Activated B cell treated with CpG ODN at 0.5 μM for 24 hours (primary cell): ENCODE measurements at regions of chr12 and their contacts with region 1.

Region 1: DNA sequence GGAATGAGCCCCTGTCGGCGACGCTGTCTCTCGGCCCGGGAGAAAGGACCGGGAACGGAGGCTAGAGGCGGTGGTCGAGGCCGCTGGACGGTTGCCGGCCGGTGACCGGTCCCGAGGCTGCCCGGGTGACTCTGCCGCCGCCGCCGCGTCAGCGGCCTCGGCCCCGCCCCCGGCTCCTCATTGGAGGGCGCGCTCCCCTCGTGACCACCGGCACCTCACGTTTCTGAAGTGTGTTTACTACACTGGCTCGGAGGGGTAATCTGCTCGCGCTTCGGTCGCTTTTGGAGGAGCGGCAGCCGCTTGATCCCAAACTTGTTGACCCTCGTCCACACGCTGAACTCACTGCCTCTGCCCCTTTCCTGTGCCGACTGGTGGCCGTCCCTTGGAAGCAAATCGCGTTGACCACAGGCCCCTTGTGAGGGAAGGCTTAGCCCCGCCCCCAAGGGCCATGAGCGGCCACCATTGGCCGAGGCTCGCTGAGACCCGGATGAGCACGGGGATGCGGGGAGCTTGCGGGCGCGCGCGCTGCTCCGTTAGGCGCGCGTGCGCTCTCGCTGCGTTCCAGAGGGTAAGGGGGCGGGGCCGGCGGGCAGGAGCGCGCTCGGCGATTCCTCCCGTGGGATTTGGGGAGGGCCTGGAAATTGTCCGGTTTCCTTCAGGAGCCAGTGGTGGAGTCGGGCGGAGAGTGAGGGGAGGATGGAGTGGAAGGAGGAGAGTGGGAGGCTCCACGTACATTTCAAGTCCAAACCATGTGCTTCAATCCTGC is at the start of gene CRY1:
- DNase-seq: peak; percentile 84
- ATAC-seq: peak; percentile 83
- H3K4me3 Mint-ChIP-seq: no peak within 1 kb of the TSS
- H3K27ac Mint-ChIP-seq: no peak within 1 kb of the TSS
- H3K4me1 Mint-ChIP-seq: peaks cover 6% of the 10 kb centered on the region
- H3K27me3 Mint-ChIP-seq: peaks cover 8% of the 10 kb centered on the region
- CTCF ChIP-seq: no peak
- total RNA-seq, gene CRY1: 4.6 and 7.1 TPM in 2 replicates

Region 2: GRCh38 chr12:105235732-105236476 is 1857.7 kb before region 1 on chr12 and contains the start of gene APPL2:
- CTCF ChIA-PET with region 1: no interaction called
- POLR2A ChIA-PET with region 1: no interaction called
- intact Hi-C with region 1: loop called (anchors 5 kb)
- DNase-seq: peak; percentile 79
- ATAC-seq: peak; percentile 82
- H3K4me3 Mint-ChIP-seq: peak within 1 kb of the TSS; percentile 88
- H3K27ac Mint-ChIP-seq: peak within 1 kb of the TSS; percentile 91
- H3K4me1 Mint-ChIP-seq: peaks cover 39% of the 10 kb centered on the region
- H3K27me3 Mint-ChIP-seq: no peaks in the 10 kb centered on the region
- CTCF ChIP-seq: no peak
- total RNA-seq, gene APPL2: 22.0 and 30.7 TPM in 2 replicates

Region 3: DNA sequence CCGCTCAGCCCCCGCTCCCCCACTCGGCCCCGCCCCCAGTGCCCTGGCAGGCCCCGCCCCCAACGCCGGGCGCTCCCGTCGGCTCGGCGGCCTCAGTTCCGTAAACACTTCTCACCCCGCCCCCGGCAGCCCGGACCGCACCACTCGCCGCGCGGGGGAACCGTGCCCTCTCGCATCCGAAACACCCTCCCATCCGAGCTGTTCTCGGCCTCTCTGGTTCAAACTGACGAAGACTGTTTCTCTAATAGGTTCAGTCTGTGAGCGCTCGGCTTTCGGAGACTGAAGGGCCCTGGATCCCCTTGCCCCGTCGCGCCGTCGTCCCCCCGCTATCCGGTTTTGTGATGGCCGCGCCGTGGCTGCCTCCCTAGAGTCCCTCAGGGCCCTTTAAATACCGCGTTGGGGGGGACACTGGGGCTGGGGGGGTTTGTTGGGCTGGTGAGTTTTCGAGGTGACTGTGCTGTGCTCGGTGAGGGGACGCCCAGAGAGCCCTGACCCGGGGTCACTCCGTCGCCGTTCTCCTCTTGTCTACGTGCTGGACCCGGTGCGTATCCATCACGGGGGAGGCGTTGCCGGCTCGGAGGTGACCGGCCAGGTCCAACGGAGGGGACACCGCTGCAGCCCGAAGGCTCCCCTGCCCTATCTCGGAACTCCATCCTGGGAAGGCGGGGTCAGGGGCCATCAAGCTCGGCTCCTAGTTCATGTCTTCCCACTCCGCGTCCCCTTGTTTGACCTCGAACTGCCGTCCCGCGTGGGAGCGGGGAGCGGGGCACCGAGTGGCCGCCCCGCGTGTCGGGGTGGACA is 791.0 kb before region 1 on chr12 and contains the start of gene TCP11L2:
- CTCF ChIA-PET with region 1: no interaction called
- POLR2A ChIA-PET with region 1: no interaction called
- intact Hi-C with region 1: loop called (anchors 1 kb)
- DNase-seq: peak; percentile 92
- ATAC-seq: peak; percentile 62
- H3K4me3 Mint-ChIP-seq: peak within 1 kb of the TSS; percentile 97
- H3K27ac Mint-ChIP-seq: peak within 1 kb of the TSS; percentile 100
- H3K4me1 Mint-ChIP-seq: peaks cover 71% of the 10 kb centered on the region
- H3K27me3 Mint-ChIP-seq: no peaks in the 10 kb centered on the region
- CTCF ChIP-seq: no peak
- total RNA-seq, gene TCP11L2: 48.0 and 52.5 TPM in 2 replicates

Region 4: GRCh38 chr12:106910202-106910601 is 183.4 kb before region 1 on chr12:
- CTCF ChIA-PET with region 1: no interaction called
- POLR2A ChIA-PET with region 1: no interaction called
- intact Hi-C with region 1: loop called (anchors 5 kb)
- DNase-seq: no peak
- ATAC-seq: peak; percentile 84
- H3K4me3 Mint-ChIP-seq: peak overlapping the region; percentile 9
- H3K27ac Mint-ChIP-seq: no peak overlapping the region
- H3K4me1 Mint-ChIP-seq: peaks cover 14% of the 10 kb centered on the region
- H3K27me3 Mint-ChIP-seq: peaks cover 79% of the 10 kb centered on the region
- CTCF ChIP-seq: no peak

Region 5: GRCh38 chr12:106986625-106987430 is 106.8 kb before region 1 on chr12 and contains the start of gene MTERF2:
- CTCF ChIA-PET with region 1: no interaction called
- POLR2A ChIA-PET with region 1: interaction called, 3 read pairs
- intact Hi-C with region 1: loop called (anchors 1 kb)
- DNase-seq: peak; percentile 61
- ATAC-seq: peak; percentile 99
- H3K4me3 Mint-ChIP-seq: peak within 1 kb of the TSS; percentile 95
- H3K27ac Mint-ChIP-seq: peak within 1 kb of the TSS; percentile 70
- H3K4me1 Mint-ChIP-seq: peaks cover 39% of the 10 kb centered on the region
- H3K27me3 Mint-ChIP-seq: no peaks in the 10 kb centered on the region
- CTCF ChIP-seq: no peak
- total RNA-seq, gene MTERF2: 8.3 and 9.4 TPM in 2 replicates

Region 6: DNA sequence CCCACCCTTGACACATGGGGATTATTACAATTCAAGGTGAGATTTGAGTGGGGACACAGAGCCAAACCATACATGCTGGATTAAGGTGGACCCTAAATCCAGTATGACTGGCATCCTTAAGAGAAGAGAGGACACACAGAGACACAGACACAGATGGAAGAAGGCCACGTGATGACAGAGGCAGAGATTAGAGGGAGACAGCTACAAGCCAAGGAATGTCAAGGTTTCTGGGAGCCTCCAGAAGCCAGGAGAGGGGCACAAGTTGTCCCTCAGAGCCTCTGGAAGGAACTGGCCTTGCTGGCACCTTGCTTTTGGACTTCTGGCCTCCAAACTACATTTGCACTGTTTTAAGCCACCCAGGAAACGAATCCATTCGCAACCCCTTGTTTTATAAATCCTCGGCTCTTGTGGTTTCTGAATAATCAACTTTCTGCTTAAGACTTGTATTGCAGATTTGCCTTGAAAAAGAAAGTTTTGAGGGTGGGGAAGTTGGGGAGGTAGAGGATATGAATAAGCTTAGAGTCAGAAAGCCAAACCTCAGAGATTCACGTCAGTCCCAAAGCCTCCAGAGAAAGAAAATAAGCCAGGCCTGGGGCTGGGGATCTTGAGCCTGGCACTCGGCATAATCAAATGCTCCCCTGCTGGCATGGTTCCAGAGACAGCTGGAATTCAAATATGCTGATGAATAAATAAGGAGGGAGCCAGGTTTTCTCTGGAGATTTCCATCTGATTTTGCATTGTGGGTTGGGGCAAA is 367.8 kb after region 1 on chr12:
- CTCF ChIA-PET with region 1: no interaction called
- POLR2A ChIA-PET with region 1: no interaction called
- intact Hi-C with region 1: no loop called
- DNase-seq: no peak
- ATAC-seq: no peak
- H3K4me3 Mint-ChIP-seq: no peak overlapping the region
- H3K27ac Mint-ChIP-seq: no peak overlapping the region
- H3K4me1 Mint-ChIP-seq: no peaks in the 10 kb centered on the region
- H3K27me3 Mint-ChIP-seq: no peaks in the 10 kb centered on the region
- CTCF ChIP-seq: no peak

Region 7: GRCh38 chr12:107607464-107608392 is 514.1 kb after region 1 on chr12:
- CTCF ChIA-PET with region 1: interaction called, 3 read pairs
- POLR2A ChIA-PET with region 1: no interaction called
- intact Hi-C with region 1: loop called (anchors 1 kb)
- DNase-seq: peak; percentile 68
- ATAC-seq: peak; percentile 60
- H3K4me3 Mint-ChIP-seq: no peak overlapping the region
- H3K27ac Mint-ChIP-seq: no peak overlapping the region
- H3K4me1 Mint-ChIP-seq: no peaks in the 10 kb centered on the region
- H3K27me3 Mint-ChIP-seq: no peaks in the 10 kb centered on the region
- CTCF ChIP-seq: peak; percentile 53

Region 8: DNA sequence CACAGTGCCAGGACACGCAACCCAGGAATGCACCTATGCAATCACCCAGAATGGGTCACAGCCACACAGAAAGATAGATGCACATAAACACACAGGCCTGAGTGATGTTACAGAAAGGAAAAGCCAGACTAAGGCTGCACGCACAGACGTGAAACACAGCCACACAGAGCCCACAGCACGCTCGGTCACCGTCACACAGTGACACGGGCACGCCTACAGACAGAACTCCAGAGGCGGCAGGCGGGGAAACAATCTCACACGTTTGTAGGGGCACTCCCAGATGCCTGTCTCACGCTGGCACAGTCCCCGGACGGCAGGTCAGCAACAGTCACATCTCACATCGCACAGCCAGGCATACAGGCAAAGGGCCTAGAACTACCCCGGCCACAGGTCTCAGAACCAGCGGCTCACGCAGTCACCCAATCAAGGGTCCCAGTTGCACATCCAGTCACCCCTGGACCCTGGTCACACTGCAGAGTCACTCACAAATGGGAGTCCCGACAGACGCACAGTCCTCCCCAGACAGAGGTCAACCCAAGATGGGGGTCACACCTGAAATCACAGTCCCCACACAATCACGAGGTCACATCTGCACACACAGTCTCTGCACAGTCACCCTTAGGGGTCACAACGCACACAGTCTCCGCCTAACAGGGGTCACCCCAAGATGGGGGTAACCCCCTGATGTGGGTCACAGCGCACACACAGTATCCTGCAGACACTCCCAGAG is 1763.0 kb after region 1 on chr12:
- CTCF ChIA-PET with region 1: no interaction called
- POLR2A ChIA-PET with region 1: no interaction called
- intact Hi-C with region 1: loop called (anchors 2 kb)
- DNase-seq: no peak
- ATAC-seq: peak; percentile 7
- H3K4me3 Mint-ChIP-seq: peak overlapping the region; percentile 94
- H3K27ac Mint-ChIP-seq: peak overlapping the region; percentile 88
- H3K4me1 Mint-ChIP-seq: peaks cover 59% of the 10 kb centered on the region
- H3K27me3 Mint-ChIP-seq: no peaks in the 10 kb centered on the region
- CTCF ChIP-seq: no peak